Cardiac septum (tissue), 1 donor: ENCODE measurements at regions of chr1 and their contacts with region 1.

Region 1: GRCh38 chr1:242467556-242468145 is 56.8 kb downstream of the PLD5 start:
- DNase-seq: no peak

Region 2: GRCh38 chr1:242187816-242188215 is 279.8 kb before region 1 on chr1:
- intact Hi-C with region 1: no loop called
- DNase-seq: no peak

Region 3: DNA sequence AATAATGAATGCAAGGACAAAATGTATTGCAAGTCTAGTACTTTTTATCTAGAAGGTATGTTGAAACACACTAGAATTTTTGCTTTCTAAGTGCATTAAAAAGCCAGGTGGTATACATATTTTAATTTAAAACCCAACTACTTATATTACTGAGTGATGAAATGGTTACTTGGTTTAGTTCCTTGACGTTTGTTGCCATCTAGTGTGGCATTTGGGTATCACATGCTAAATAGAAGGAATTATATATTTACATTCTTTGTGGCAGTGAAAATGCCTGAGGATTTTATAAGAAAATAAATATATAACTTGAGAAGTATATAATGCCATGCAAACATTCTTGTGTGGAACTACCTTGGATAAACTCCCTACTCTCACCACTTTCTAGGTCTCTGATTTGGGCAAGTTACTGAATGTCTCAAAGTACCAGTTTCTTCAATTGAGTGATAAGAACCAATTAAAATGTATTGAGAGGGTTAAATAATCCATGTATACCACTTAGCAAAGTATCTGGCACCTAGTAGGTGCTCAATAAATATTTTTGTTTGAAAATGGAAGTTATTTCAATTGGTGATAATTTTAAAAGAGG is 857.7 kb after region 1 on chr1:
- intact Hi-C with region 1: loop called (anchors 10 kb)
- DNase-seq: no peak